PC-3 (cell line): ENCODE measurements at regions of chr21 and their contacts with region 1.

Region 1: GRCh38 chr21:46509741-46510502 is 51.2 kb downstream of the DIP2A start:
- DNase-seq: peak; percentile 98
- ATAC-seq: peak; percentile 98
- H3K4me3 ChIP-seq: peak overlapping the region; percentile 24; the same call in 1 of the 2 replicates
- H3K27ac ChIP-seq: peak overlapping the region; percentile 95
- H3K4me1 ChIP-seq: peaks cover 24% of the 10 kb centered on the region
- H3K27me3 ChIP-seq: no peaks in the 10 kb centered on the region
- CTCF ChIP-seq: no peak

Region 2: GRCh38 chr21:46458315-46459023 is 51.5 kb before region 1 on chr21 and contains the start of gene DIP2A:
- CTCF ChIA-PET with region 1: no interaction called
- POLR2A ChIA-PET with region 1: no interaction called
- intact Hi-C with region 1: loop called (anchors 1 kb)
- DNase-seq: peak; percentile 99
- ATAC-seq: peak; percentile 95
- H3K4me3 ChIP-seq: peak within 1 kb of the TSS; percentile 89
- H3K27ac ChIP-seq: peak within 1 kb of the TSS; percentile 70
- H3K4me1 ChIP-seq: peaks cover 28% of the 10 kb centered on the region
- H3K27me3 ChIP-seq: no peaks in the 10 kb centered on the region
- CTCF ChIP-seq: no peak
- total RNA-seq, gene DIP2A: 23.7 and 33.6 TPM in 2 replicates